MCF 10A (cell line): ENCODE measurements at regions of chr11 and their contacts with region 1.

Region 1: GRCh38 chr11:111932611-111932950 is 4.6 kb upstream of the DIXDC1 start:
- DNase-seq: no peak
- H3K4me3 Mint-ChIP-seq: no peak overlapping the region
- H3K27ac Mint-ChIP-seq: peak overlapping the region; percentile 16
- H3K4me1 Mint-ChIP-seq: peaks cover 21% of the 10 kb centered on the region
- H3K27me3 Mint-ChIP-seq: no peaks in the 10 kb centered on the region
- CTCF ChIP-seq: no peak

Region 2: DNA sequence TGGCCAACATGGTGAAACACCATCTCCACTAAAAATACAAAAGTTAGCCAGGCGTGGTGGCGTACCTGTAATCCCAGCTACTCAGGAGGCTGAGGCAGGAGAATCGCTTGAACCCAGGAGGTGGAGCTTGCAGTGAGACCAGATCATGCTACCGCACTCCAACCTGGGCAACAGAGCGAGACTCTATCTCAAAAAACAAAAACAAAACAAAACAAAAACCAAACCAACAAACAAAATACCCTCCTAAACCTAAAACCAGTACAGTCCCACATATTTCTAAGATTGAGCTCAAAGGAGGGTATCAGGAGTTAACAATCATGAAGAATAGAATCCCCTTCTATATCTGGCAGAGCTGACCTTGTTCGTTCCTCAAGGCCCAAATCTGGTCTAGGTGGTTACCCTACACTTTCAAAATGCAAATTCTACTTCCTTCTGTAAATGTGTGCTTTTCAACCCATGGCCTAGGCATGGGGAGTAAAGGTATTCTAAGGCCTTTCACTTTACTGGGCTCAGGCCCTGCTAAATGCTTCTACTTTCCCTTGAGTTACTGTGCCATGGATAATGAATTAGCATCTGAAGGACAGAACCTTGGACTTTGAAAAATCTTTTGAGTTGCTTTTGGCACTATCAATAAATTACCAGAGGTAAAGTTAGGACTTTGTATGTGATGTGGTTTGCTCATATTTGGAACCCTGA is 156.0 kb before region 1 on chr11:
- CTCF ChIA-PET with region 1: no interaction called
- POLR2A ChIA-PET with region 1: no interaction called
- intact Hi-C with region 1: no loop called
- DNase-seq: no peak
- H3K4me3 Mint-ChIP-seq: no peak overlapping the region
- H3K27ac Mint-ChIP-seq: no peak overlapping the region
- H3K4me1 Mint-ChIP-seq: no peaks in the 10 kb centered on the region
- H3K27me3 Mint-ChIP-seq: no peaks in the 10 kb centered on the region
- CTCF ChIP-seq: no peak

Region 3: GRCh38 chr11:111870886-111871692 is 61.5 kb before region 1 on chr11 and contains the start of gene ALG9:
- CTCF ChIA-PET with region 1: interaction called, 18 read pairs
- POLR2A ChIA-PET with region 1: interaction called, 4 read pairs
- intact Hi-C with region 1: no loop called
- DNase-seq: peak; percentile 82
- H3K4me3 Mint-ChIP-seq: peak within 1 kb of the TSS; percentile 96
- H3K27ac Mint-ChIP-seq: peak within 1 kb of the TSS; percentile 57
- H3K4me1 Mint-ChIP-seq: peaks cover 12% of the 10 kb centered on the region
- H3K27me3 Mint-ChIP-seq: no peaks in the 10 kb centered on the region
- CTCF ChIP-seq: peak; percentile 44
- total RNA-seq, gene ALG9: 28.8 and 31.2 TPM in 2 replicates

Region 4: GRCh38 chr11:111911563-111912401 is 20.8 kb before region 1 on chr11 and contains the start of gene CRYAB:
- CTCF ChIA-PET with region 1: interaction called, 12 read pairs
- POLR2A ChIA-PET with region 1: interaction called, 10 read pairs
- intact Hi-C with region 1: no loop called
- DNase-seq: peak; percentile 61
- H3K4me3 Mint-ChIP-seq: peak within 1 kb of the TSS; percentile 41
- H3K27ac Mint-ChIP-seq: peak within 1 kb of the TSS; percentile 86
- H3K4me1 Mint-ChIP-seq: peaks cover 18% of the 10 kb centered on the region
- H3K27me3 Mint-ChIP-seq: no peaks in the 10 kb centered on the region
- CTCF ChIP-seq: no peak
- total RNA-seq, gene CRYAB: 1.2 and 2.5 TPM in 2 replicates

Region 5: GRCh38 chr11:111944651-111945051 is 12.1 kb after region 1 on chr11:
- CTCF ChIA-PET with region 1: interaction called, 33 read pairs
- POLR2A ChIA-PET with region 1: interaction called, 28 read pairs
- intact Hi-C with region 1: no loop called
- DNase-seq: peak; percentile 76
- H3K4me3 Mint-ChIP-seq: peak overlapping the region; percentile 6
- H3K27ac Mint-ChIP-seq: peak overlapping the region; percentile 98
- H3K4me1 Mint-ChIP-seq: peaks cover 53% of the 10 kb centered on the region
- H3K27me3 Mint-ChIP-seq: no peaks in the 10 kb centered on the region
- CTCF ChIP-seq: no peak